IMR-90 (cell line): ENCODE measurements at regions of chr5 and their contacts with region 1.

Region 1: DNA sequence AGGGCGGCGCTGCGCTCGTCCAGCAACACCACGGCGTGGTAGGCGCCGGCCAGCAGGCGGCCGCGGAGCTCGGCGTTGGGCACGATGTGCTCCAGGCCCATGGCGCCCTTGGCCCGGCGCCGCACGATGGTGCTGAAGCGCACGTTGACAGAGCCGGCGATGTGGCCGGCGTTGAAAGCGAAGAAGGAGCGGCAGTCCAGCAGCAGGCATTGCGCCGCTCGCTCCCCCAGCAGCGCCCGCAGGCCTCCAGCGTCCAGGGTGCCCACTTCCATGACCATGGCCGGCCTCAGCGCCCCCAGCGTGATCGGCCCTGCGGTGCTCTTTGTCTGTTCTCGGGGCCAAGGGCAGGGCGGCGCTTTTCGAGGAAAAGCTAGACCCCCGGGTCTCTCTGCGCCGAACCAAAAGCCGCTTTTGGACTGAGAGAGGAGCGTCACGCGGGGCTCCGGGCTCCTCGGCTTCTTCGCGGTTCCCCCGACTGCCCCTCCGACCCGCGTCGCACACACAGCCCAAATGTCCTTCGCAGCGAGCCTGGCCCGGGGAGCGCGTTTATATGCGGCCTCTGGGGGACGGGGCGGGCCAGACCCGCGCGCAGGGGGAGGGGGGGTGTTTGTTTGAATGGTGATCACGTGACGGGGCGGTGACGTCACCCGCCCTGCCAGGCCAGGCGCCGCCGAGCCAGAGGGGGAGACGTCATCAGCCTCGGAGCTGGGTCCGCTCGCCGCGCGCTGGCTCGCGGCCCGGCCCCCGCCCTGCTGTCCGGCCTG is at the start of gene DUSP1:
- DNase-seq: peak; percentile 98
- ATAC-seq: peak; percentile 60
- H3K4me3 ChIP-seq: peak within 1 kb of the TSS; percentile 88
- H3K27ac ChIP-seq: peak within 1 kb of the TSS; percentile 98
- H3K4me1 ChIP-seq: peaks cover 20% of the 10 kb centered on the region
- H3K27me3 ChIP-seq: no peaks in the 10 kb centered on the region
- CTCF ChIP-seq: no peak
- POLR2A ChIP-seq: no peak
- RAD21 ChIP-seq: no peak
- total RNA-seq, gene DUSP1: 304 and 320 TPM in 2 replicates

Region 2: DNA sequence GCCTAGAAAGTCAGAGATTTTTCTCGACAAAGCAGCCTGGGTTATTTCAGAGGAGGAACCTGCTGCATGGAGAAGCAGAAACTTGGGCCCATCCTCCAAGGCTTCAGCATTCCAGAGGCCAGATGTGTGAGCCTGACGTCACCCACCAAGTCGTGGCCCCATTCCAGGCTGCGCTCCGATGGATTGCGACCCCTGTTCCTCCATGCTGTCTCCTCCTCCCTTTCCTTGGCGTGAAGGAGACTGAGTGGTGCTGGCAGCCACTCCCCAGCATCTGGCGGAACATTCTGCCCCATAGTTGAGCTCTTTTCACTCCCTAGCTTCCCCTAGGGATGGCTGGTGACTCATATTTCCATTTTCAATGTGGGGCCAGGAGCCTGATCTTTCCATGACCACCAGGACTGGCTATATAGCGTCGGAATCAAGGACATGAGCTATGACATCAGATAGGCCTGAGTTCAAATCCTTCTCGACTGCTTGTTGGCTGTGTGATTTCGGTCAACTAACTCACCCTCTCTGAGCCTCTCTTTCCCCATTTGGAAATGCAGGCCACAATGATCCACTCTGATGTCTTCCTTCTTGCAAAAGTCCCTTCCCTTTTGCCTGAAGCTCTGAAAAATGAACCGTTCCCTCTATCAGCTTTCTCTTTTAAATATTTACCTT is 24.6 kb after region 1 on chr5:
- CTCF ChIA-PET with region 1: interaction called, 18 read pairs
- POLR2A ChIA-PET with region 1: interaction called, 8 read pairs
- dilution Hi-C with region 1: no loop called
- in situ Hi-C with region 1: no loop called
- intact Hi-C with region 1: loop called (anchors 1 kb)
- DNase-seq: peak; percentile 99
- ATAC-seq: peak; percentile 53
- H3K4me3 ChIP-seq: no peak overlapping the region
- H3K27ac ChIP-seq: peak overlapping the region; percentile 53
- H3K4me1 ChIP-seq: peaks cover 35% of the 10 kb centered on the region
- H3K27me3 ChIP-seq: no peaks in the 10 kb centered on the region
- CTCF ChIP-seq: 0 out of 2 replicates have a peak, but pooled peaks have one; percentile 4
- POLR2A ChIP-seq: no peak; the same call in 1 of the 2 replicates
- RAD21 ChIP-seq: no peak; the same call in 1 of the 2 replicates

Region 3: DNA sequence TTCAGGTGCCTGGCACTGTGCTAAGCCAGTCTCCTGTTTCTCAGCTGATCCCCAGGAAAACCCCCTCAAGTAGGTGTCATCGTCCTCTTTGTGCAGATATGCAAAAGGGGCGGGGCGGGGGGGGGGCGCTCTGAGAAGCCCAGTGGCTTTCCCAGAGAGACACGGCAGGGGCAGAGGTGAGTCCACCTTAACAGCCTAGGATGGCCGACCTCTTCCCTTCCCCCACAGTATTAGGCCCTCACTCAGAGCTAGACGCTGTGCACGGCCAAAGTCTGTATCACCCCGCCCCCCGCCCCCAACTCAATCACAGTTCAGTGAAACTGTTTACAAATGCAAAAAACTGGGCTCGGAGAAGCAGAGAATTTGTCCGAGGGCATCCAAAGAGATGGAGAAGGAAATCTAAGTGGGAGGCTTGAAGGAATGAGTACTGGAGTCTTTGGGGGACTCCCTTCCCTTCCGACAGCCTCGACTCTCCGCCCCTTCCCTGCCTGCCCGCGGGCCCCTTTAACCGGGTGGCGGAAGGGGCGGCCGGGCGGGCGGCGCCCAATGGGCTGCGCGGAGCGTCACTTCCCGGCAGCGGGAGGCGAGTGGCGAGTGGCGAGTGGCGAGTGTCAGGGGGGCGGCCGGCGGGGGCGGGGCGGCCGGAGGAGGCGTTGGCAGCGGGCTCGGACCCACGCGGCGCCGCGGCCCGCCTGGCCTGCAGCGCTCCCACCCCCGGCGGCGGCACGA is 63.0 kb after region 1 on chr5 and contains the start of gene ERGIC1:
- CTCF ChIA-PET with region 1: interaction called, 3 read pairs
- POLR2A ChIA-PET with region 1: no interaction called
- dilution Hi-C with region 1: no loop called
- in situ Hi-C with region 1: no loop called
- intact Hi-C with region 1: loop called (anchors 1 kb)
- DNase-seq: peak; percentile 78
- ATAC-seq: peak; percentile 92
- H3K4me3 ChIP-seq: peak within 1 kb of the TSS; percentile 96
- H3K27ac ChIP-seq: peak within 1 kb of the TSS; percentile 93
- H3K4me1 ChIP-seq: peaks cover 26% of the 10 kb centered on the region
- H3K27me3 ChIP-seq: no peaks in the 10 kb centered on the region
- CTCF ChIP-seq: no peak
- POLR2A ChIP-seq: peak; percentile 95
- RAD21 ChIP-seq: peak; percentile 19; the same call in 1 of the 2 replicates
- total RNA-seq, gene ERGIC1: 124 and 134 TPM in 2 replicates

Region 4: GRCh38 chr5:172868924-172869591 is 98.2 kb after region 1 on chr5:
- CTCF ChIA-PET with region 1: interaction called, 5 read pairs
- POLR2A ChIA-PET with region 1: interaction called, 15 read pairs
- dilution Hi-C with region 1: no loop called
- in situ Hi-C with region 1: no loop called
- intact Hi-C with region 1: no loop called
- DNase-seq: peak; percentile 96
- ATAC-seq: peak; percentile 62
- H3K4me3 ChIP-seq: no peak overlapping the region
- H3K27ac ChIP-seq: peak overlapping the region; percentile 78
- H3K4me1 ChIP-seq: peaks cover 52% of the 10 kb centered on the region
- H3K27me3 ChIP-seq: no peaks in the 10 kb centered on the region
- CTCF ChIP-seq: peak; percentile 66
- POLR2A ChIP-seq: peak; percentile 76
- RAD21 ChIP-seq: peak; percentile 68

Region 5: DNA sequence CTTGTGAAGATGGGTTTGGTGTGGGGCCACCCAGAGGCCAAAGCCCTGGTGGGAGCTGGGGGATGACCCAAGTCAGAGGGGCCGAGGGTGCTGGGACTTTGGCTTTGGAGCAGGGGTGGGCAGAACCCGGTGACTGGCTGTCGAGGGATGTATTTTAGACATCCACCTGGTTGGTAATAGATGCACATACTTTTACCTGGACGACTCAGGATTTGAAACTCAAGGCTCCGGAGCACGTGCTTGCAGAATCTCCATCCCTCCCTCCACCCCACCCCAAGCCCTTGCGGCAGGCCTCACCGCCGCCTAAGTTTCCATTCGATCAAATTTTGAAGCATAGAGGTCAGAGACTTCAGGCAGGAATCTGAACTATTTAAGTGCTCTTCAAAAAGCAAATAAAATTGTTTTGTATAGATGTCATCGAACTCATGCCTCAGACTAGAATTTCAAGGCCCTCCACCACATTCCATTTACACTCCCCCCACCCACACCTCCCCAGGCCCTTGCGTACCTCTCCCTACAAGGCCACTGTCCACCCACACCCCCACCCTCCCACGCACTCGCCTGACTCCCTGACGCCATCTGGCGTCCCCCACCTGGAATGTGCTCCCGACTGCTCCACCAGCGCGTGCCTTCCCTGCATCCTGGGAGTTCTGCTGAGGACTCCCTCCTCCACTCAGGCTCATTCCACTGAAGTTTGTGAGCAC is 131.8 kb after region 1 on chr5:
- CTCF ChIA-PET with region 1: interaction called, 5 read pairs
- POLR2A ChIA-PET with region 1: interaction called, 4 read pairs
- dilution Hi-C with region 1: no loop called
- in situ Hi-C with region 1: loop called (anchors 10 kb)
- intact Hi-C with region 1: loop called (anchors 1 kb)
- DNase-seq: peak; percentile 99
- ATAC-seq: peak; percentile 74
- H3K4me3 ChIP-seq: no peak overlapping the region
- H3K27ac ChIP-seq: peak overlapping the region; percentile 97
- H3K4me1 ChIP-seq: peaks cover 57% of the 10 kb centered on the region
- H3K27me3 ChIP-seq: no peaks in the 10 kb centered on the region
- CTCF ChIP-seq: peak; percentile 64
- POLR2A ChIP-seq: no peak; the same call in 1 of the 2 replicates
- RAD21 ChIP-seq: peak; percentile 54

Region 6: GRCh38 chr5:172973127-172973916 is 202.5 kb after region 1 on chr5:
- CTCF ChIA-PET with region 1: no interaction called
- POLR2A ChIA-PET with region 1: interaction called, 11 read pairs
- dilution Hi-C with region 1: no loop called
- in situ Hi-C with region 1: no loop called
- intact Hi-C with region 1: no loop called
- DNase-seq: peak; percentile 73
- ATAC-seq: peak; percentile 54
- H3K4me3 ChIP-seq: no peak overlapping the region
- H3K27ac ChIP-seq: no peak overlapping the region
- H3K4me1 ChIP-seq: peaks cover 1% of the 10 kb centered on the region; the same call in 1 of the 2 replicates
- H3K27me3 ChIP-seq: no peaks in the 10 kb centered on the region
- CTCF ChIP-seq: no peak
- POLR2A ChIP-seq: no peak
- RAD21 ChIP-seq: no peak